ENCODE measurements at regions of chr5 and their contacts with region 1.

Region 1: GRCh38 chr5:81006947-81007636 is 46.9 kb downstream of the RASGRF2 start:
- DNase-seq: peak; percentile 71
- ATAC-seq: peak; percentile 83
- H3K4me3 Mint-ChIP-seq: peak overlapping the region; percentile 77
- H3K27ac Mint-ChIP-seq: peak overlapping the region; percentile 96
- H3K4me1 Mint-ChIP-seq: peaks cover 82% of the 10 kb centered on the region
- H3K27me3 Mint-ChIP-seq: no peaks in the 10 kb centered on the region

Region 2: DNA sequence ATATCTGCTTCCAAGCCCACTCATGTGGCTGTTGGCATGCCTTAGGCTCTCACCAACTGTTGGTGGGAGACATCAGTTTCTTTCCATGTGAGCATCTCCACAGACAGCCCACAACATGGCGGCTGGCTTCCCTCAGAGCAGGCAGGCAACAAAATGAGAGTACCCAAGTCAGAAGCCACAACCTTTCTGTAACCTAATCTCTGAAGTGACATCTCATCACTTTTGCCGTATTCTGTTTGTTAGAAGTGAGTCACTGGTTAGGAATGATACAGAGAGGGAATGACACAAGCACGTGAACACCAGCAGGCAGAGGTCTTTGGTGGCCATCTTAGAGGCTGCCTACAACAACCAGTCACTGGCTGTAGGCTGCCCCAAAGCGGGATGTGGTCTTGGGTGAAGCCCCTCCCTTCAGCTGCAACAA is 135.5 kb before region 1 on chr5:
- CTCF ChIA-PET with region 1: no interaction called
- POLR2A ChIA-PET with region 1: no interaction called
- intact Hi-C with region 1: loop called in 1 of 2 experiments (anchors 1 kb)
- DNase-seq: peak; percentile 76
- ATAC-seq: peak; percentile 97
- H3K4me3 Mint-ChIP-seq: no peak overlapping the region
- H3K27ac Mint-ChIP-seq: peak overlapping the region; percentile 61
- H3K4me1 Mint-ChIP-seq: peaks cover 27% of the 10 kb centered on the region
- H3K27me3 Mint-ChIP-seq: no peaks in the 10 kb centered on the region

Region 3: GRCh38 chr5:80975065-80975464 is 32.0 kb before region 1 on chr5:
- CTCF ChIA-PET with region 1: interaction called, 7 read pairs
- POLR2A ChIA-PET with region 1: interaction called, 12 read pairs
- intact Hi-C with region 1: no loop called
- DNase-seq: no peak
- ATAC-seq: no peak
- H3K4me3 Mint-ChIP-seq: no peak overlapping the region
- H3K27ac Mint-ChIP-seq: no peak overlapping the region
- H3K4me1 Mint-ChIP-seq: peaks cover 72% of the 10 kb centered on the region
- H3K27me3 Mint-ChIP-seq: no peaks in the 10 kb centered on the region

Region 4: GRCh38 chr5:81020478-81021174 is 13.5 kb after region 1 on chr5:
- CTCF ChIA-PET with region 1: interaction called, 12 read pairs
- POLR2A ChIA-PET with region 1: interaction called, 14 read pairs
- intact Hi-C with region 1: loop called (anchors 1 kb)
- DNase-seq: no peak
- ATAC-seq: no peak
- H3K4me3 Mint-ChIP-seq: no peak overlapping the region
- H3K27ac Mint-ChIP-seq: no peak overlapping the region
- H3K4me1 Mint-ChIP-seq: peaks cover 90% of the 10 kb centered on the region
- H3K27me3 Mint-ChIP-seq: no peaks in the 10 kb centered on the region

Measured in activated CD4-positive, alpha-beta T cell treated with anti-CD3 and anti-CD28 coated beads for 36 hours (primary cell).